PC-9 (cell line): ENCODE measurements at regions of chr6 and their contacts with region 1.

Region 1: DNA sequence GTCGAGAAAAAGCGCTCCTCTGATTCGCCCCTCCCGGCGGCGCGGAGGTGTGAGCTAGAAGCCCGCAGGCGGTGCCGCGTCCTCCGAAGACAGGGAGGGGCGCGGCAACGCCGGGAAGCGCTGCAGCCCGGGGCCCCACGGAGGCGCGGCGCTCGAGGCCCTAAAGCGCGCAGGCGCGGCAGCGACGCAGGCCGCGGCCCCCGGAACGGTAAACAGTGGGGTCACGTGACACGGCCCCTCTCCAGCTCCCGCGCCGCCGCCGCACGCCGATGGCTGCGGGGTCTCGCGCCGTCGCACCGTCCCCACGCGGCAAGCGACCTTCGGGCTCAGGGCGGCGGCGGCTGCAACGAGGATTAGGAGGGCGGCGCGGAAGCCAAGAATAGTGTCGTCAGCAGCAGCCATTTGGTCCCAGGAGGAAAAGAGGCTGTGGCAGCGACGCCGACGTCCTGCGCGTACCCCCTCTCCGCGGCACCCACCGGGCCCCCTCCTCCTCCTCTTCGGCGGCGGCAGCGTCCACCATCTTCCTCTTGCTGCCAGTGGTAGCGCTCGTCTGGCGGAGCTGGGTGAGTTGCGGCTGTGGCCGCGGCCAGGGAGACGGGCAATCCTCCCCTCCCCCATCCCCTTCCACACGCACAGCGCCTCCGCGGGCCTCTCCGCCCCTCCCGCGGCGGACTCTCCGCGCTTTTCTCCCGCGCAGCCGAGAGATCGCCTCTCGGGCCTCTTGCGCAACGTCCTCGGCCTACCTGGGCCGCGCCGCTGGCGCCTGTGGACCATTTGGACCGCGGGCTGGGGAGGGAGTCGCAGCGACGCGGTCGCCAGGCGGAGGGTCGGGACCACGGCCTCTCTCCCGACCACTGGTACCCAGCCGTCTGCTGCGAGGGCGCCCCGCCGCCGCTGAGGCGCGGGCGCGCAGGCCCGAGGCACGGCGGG is at the start of gene PHF3:
- DNase-seq: peak; percentile 61 to 92
- H3K4me3 ChIP-seq: peak within 1 kb of the TSS; percentile 68
- H3K27ac ChIP-seq: peak within 1 kb of the TSS; percentile 73
- H3K4me1 ChIP-seq: peaks cover 37% of the 10 kb centered on the region
- H3K27me3 ChIP-seq: no peaks in the 10 kb centered on the region
- CTCF ChIP-seq: no peak; the same call in 1 of the 2 replicates
- total RNA-seq, gene PHF3: 59.8 and 67.1 TPM in 2 replicates

Region 2: GRCh38 chr6:62640749-62641148 is 995.1 kb before region 1 on chr6:
- CTCF ChIA-PET with region 1: no interaction called
- POLR2A ChIA-PET with region 1: no interaction called
- intact Hi-C with region 1: no loop called
- DNase-seq: no peak
- H3K4me3 ChIP-seq: no peak overlapping the region
- H3K27ac ChIP-seq: no peak overlapping the region
- H3K4me1 ChIP-seq: no peaks in the 10 kb centered on the region
- H3K27me3 ChIP-seq: no peaks in the 10 kb centered on the region
- CTCF ChIP-seq: no peak

Region 3: DNA sequence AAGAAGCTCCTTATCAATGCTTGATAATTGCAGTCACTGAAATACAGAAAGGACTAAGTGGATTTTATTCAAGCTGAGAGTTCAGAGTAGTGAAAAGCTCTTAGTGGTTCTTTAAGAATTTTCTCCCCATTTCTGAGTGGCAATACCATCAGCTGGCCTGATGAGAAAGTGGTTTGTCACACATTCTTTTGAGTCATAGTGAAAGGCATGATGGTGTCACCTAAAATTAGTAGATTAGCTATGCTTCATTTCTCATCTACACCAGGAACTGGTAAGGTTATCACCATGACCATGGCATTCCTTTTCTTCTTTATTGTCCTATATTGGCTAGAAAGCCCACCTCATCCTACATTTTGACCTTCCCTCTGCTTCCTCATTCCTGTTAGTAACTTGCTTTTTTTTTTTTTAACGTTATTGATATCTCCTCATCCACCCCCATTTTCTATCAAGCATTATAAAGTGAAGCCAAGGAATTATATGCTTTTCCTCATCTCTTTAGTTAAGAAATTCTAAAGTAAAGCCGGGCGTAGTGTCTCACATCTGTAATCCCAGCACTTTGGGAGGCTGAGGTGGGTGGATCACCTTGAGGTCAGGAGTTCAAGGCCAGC is 131.0 kb before region 1 on chr6:
- CTCF ChIA-PET with region 1: no interaction called
- POLR2A ChIA-PET with region 1: interaction called, 14 read pairs
- intact Hi-C with region 1: no loop called
- DNase-seq: peak in 1 of 2 experiments; percentile 88
- H3K4me3 ChIP-seq: no peak overlapping the region
- H3K27ac ChIP-seq: peak overlapping the region; percentile 40
- H3K4me1 ChIP-seq: peaks cover 27% of the 10 kb centered on the region
- H3K27me3 ChIP-seq: no peaks in the 10 kb centered on the region
- CTCF ChIP-seq: no peak

Region 4: DNA sequence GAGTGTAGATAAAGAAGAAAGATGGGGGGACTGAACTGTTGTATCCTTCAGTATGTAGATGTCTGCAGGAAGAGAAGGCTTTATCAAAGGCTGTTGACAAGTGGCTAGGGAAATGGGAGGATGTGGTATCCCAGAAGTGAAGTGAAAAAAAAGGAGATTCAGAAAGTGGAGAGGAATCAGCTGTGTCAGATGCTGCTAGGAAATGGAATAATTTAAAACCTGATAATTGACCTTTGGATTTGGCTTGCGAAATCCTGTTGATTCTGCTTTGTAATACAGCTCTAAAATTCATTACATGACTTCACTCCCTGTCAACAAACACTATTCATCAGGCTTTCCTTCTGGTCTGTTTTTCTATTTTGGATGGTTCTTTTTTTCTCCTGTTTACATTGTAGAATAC is 41.4 kb after region 1 on chr6:
- CTCF ChIA-PET with region 1: no interaction called
- POLR2A ChIA-PET with region 1: no interaction called
- intact Hi-C with region 1: loop called (anchors 5 kb)
- DNase-seq: no peak
- H3K4me3 ChIP-seq: no peak overlapping the region
- H3K27ac ChIP-seq: no peak overlapping the region
- H3K4me1 ChIP-seq: no peaks in the 10 kb centered on the region
- H3K27me3 ChIP-seq: no peaks in the 10 kb centered on the region
- CTCF ChIP-seq: no peak